ENCODE measurements at regions of chr3 and their contacts with region 1.

Region 1: DNA sequence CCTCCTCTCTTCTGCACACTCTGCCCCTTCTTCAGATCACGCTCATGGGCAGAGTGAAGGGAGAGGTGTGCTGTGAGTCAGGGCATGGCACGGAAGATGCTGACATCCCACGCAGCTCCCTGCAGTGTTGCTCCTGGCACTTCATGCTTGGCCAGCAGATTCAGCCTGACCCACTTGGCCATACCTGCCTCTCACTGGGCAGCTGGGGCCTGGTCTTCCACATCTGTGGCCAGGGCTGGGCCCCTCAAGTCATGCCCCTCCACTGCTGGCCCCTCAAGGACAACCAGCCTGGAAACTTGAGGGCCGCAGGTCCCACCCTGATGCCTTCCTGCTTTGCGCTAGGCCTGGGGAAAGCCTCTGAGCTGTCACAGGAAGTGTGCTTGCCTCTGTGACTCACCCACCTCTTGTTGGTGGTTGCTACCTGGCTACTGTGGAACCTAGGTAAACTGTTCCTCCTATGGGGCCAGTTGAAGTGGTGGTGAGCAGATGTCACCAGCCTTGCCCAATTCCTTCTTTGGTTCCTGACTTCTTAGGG is 48.7 kb downstream of the BSN start:
- DNase-seq: peak in 7 of 9 donors; percentile 20 to 41 (median 31)
- ATAC-seq: peak; percentile 87
- H3K4me3 ChIP-seq: no peak overlapping the region
- H3K4me3 Mint-ChIP-seq: peak overlapping the region in 2 of 10 donors; percentile 18 to 49
- H3K27ac ChIP-seq: peak overlapping the region; percentile 22
- H3K27ac Mint-ChIP-seq: peak overlapping the region; percentile 40 to 87 (median 79)
- H3K4me1 ChIP-seq: peaks cover 11 to 12% of the 10 kb centered on the region in 2 donors
- H3K4me1 Mint-ChIP-seq: peaks cover 12 to 19% (median 19%) of the 10 kb centered on the region in 7 donors
- H3K27me3 ChIP-seq: no peaks in the 10 kb centered on the region
- H3K27me3 Mint-ChIP-seq: no peaks in the 10 kb centered on the region

Region 2: GRCh38 chr3:49553692-49554632 is 49.0 kb before region 1 on chr3 and contains the start of gene BSN:
- CTCF ChIA-PET with region 1: interaction called, 3 read pairs
- POLR2A ChIA-PET with region 1: no interaction called
- intact Hi-C with region 1: loop called in 1 of 2 experiments (anchors 1 kb)
- DNase-seq: peak; percentile 81 to 92 (median 88)
- ATAC-seq: peak; percentile 91
- H3K4me3 ChIP-seq: peak within 1 kb of the TSS; percentile 75
- H3K4me3 Mint-ChIP-seq: peak within 1 kb of the TSS; percentile 80 to 92 (median 86)
- H3K27ac ChIP-seq: peak within 1 kb of the TSS; percentile 37
- H3K27ac Mint-ChIP-seq: peak within 1 kb of the TSS in 8 of 9 donors; percentile 20 to 92 (median 41)
- H3K4me1 ChIP-seq: peaks cover 0 to 20% of the 10 kb centered on the region in 2 donors
- H3K4me1 Mint-ChIP-seq: peaks cover 9 to 20% (median 13%) of the 10 kb centered on the region in 7 donors
- H3K27me3 ChIP-seq: no peaks in the 10 kb centered on the region
- H3K27me3 Mint-ChIP-seq: peaks cover 41 to 56% (median 46%) of the 10 kb centered on the region in 5 donors
- total RNA-seq, gene BSN: 0.12 to 0.16 (median 0.14) TPM

Region 3: DNA sequence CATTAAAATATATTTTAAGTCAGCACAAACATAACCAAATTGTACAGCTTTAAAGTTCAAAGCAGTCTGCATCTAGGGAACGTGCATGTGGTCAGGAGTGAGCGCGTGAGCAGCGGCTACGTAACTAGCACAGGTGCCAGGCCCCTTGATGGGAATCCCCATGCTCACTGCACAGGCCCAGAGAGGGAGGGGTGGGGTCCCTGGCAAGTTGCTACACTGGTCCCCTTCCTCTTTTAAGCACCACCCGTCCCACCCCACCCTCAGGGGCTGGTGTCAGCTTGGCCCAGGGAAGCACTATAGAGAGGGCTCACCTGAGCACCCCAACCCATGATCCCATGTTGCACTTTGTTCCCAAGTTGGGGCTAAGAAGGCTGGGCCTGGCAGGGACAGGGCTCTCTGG is 121.6 kb after region 1 on chr3:
- CTCF ChIA-PET with region 1: no interaction called
- POLR2A ChIA-PET with region 1: no interaction called
- intact Hi-C with region 1: no loop called
- DNase-seq: peak in 5 of 9 donors; percentile 26 to 84 (median 31)
- ATAC-seq: peak; percentile 36
- H3K4me3 ChIP-seq: peak overlapping the region; percentile 89
- H3K4me3 Mint-ChIP-seq: peak overlapping the region; percentile 91 to 98 (median 96)
- H3K27ac ChIP-seq: peak overlapping the region; percentile 96
- H3K27ac Mint-ChIP-seq: peak overlapping the region; percentile 82 to 99 (median 94)
- H3K4me1 ChIP-seq: peaks cover 10 to 17% of the 10 kb centered on the region in 2 donors
- H3K4me1 Mint-ChIP-seq: peaks cover 6 to 30% (median 25%) of the 10 kb centered on the region in 7 donors
- H3K27me3 ChIP-seq: no peaks in the 10 kb centered on the region
- H3K27me3 Mint-ChIP-seq: no peaks in the 10 kb centered on the region